ENCODE measurements at regions of chr6 and their contacts with region 1.

Region 1: DNA sequence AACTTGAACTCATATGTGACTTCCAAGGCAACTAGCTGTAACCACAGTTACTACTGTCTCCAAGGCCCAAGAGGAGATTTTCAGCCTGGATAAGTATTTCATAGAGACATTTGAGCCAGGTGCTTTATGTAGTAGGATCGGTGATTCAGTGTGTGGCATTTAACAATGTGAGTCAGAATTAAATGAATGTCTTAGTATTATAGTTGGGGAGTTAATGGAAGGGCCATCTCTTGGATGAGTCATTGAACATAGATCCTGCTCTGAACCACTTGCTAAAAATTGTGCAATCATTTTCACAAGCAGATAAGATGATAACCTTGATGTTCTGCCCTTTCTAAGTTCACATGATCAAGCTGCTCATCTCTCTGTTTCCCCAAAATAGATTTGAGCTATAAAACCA is 668.9 kb upstream of the CITED2 start:
- DNase-seq: peak; percentile 66
- H3K4me3 ChIP-seq: no peak overlapping the region
- H3K27ac ChIP-seq: peak overlapping the region; percentile 73
- H3K4me1 ChIP-seq: peaks cover 47% of the 10 kb centered on the region
- H3K27me3 ChIP-seq: no peaks in the 10 kb centered on the region
- CTCF ChIP-seq: no peak

Region 2: DNA sequence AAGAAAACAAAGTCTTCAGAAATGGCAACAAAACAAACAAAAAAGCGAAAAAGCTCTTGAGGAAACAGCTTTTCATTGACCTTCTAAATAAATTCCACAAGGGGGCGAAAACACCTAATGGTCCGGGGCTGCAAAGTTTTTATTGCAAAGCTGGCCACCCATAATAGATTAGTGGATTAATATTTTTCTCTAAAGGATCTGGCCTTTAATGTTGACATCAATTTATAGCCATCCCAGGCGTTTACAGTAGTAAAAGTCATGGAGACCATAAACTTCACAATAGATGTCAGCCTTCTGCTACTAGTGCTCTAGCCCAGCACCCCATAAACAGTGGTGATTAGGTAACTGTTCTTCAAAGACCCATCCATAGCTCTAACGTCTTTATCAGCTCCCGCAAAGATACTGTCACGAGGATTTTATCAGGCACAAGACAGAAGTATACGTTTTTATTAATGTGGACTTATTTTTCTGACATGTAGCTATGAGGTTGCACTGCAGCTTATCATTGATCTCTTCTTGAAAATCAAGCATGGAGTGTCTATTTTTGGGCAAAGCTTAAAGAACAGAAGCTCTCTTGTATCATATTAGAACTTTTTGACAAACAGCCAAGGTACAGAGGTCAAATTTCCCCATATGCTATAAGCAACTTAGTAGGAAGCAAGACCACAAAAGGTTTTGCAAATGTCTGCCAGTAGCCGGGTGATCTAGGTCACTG is 673.6 kb before region 1 on chr6:
- CTCF ChIA-PET with region 1: interaction called, 6 read pairs
- POLR2A ChIA-PET with region 1: interaction called, 6 read pairs
- intact Hi-C with region 1: loop called (anchors 1 kb)
- DNase-seq: peak; percentile 86
- H3K4me3 ChIP-seq: peak overlapping the region; percentile 87
- H3K27ac ChIP-seq: peak overlapping the region; percentile 96
- H3K4me1 ChIP-seq: peaks cover 43% of the 10 kb centered on the region
- H3K27me3 ChIP-seq: no peaks in the 10 kb centered on the region
- CTCF ChIP-seq: peak; percentile 76

Region 3: GRCh38 chr6:139547111-139547776 is 496.1 kb before region 1 on chr6:
- CTCF ChIA-PET with region 1: no interaction called
- POLR2A ChIA-PET with region 1: interaction called, 3 read pairs
- intact Hi-C with region 1: loop called (anchors 1 kb)
- DNase-seq: peak; percentile 96
- H3K4me3 ChIP-seq: peak overlapping the region; percentile 16
- H3K27ac ChIP-seq: peak overlapping the region; percentile 93
- H3K4me1 ChIP-seq: peaks cover 48% of the 10 kb centered on the region
- H3K27me3 ChIP-seq: no peaks in the 10 kb centered on the region
- CTCF ChIP-seq: no peak

Region 4: DNA sequence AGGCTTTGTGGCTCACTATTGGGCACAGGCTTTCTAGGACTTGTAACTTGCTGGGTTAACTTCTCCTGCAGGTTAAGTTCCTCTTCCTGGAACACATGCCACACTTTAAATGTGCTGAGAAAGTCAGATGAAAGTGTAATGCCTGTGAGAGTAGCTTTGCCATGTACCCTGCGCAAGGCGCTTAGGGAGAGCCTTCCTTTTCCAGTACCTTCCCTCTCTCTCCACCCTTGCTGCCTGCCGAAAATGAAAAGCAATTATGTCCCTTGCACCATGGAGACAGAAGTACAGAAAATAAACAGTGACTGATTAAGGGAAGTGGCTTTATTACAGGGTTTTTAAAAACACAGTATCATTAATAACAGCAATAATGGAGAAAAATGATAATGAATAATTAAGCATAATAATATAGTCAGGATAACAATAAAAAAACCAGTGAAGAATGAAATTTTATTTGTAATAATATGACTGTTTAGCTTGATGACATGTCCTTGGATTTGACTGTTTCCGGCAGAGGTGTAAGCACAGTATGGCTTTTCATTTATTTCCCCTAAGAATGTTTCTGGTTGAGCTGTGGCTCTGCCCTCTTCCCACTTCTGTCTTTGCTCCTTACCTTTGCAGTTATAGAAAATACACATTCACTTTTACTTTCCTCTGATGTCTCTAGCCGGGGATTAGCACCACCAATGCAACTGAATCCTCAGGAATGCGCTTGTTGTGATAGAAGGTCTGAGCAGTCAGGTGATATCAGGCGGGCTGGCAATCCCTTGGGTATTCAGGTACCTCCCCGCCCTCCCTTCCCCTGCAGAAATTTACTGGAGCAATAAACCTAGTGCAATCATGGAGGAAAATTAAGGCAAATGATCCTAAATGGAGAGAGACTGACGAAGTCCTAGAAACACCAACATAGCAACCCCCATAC is 196.5 kb before region 1 on chr6:
- CTCF ChIA-PET with region 1: no interaction called
- POLR2A ChIA-PET with region 1: no interaction called
- intact Hi-C with region 1: no loop called
- DNase-seq: no peak
- H3K4me3 ChIP-seq: no peak overlapping the region
- H3K27ac ChIP-seq: no peak overlapping the region
- H3K4me1 ChIP-seq: no peaks in the 10 kb centered on the region
- H3K27me3 ChIP-seq: no peaks in the 10 kb centered on the region
- CTCF ChIP-seq: no peak

Region 5: GRCh38 chr6:139940741-139941729 is 102.3 kb before region 1 on chr6:
- CTCF ChIA-PET with region 1: no interaction called
- POLR2A ChIA-PET with region 1: no interaction called
- intact Hi-C with region 1: loop called (anchors 5 kb)
- DNase-seq: no peak
- H3K4me3 ChIP-seq: no peak overlapping the region
- H3K27ac ChIP-seq: no peak overlapping the region
- H3K4me1 ChIP-seq: peaks cover 35% of the 10 kb centered on the region
- H3K27me3 ChIP-seq: no peaks in the 10 kb centered on the region
- CTCF ChIP-seq: no peak

Region 6: GRCh38 chr6:140134224-140134623 is 90.9 kb after region 1 on chr6:
- CTCF ChIA-PET with region 1: no interaction called
- POLR2A ChIA-PET with region 1: no interaction called
- intact Hi-C with region 1: no loop called
- DNase-seq: no peak
- H3K4me3 ChIP-seq: no peak overlapping the region
- H3K27ac ChIP-seq: no peak overlapping the region
- H3K4me1 ChIP-seq: no peaks in the 10 kb centered on the region
- H3K27me3 ChIP-seq: no peaks in the 10 kb centered on the region
- CTCF ChIP-seq: no peak

Region 7: DNA sequence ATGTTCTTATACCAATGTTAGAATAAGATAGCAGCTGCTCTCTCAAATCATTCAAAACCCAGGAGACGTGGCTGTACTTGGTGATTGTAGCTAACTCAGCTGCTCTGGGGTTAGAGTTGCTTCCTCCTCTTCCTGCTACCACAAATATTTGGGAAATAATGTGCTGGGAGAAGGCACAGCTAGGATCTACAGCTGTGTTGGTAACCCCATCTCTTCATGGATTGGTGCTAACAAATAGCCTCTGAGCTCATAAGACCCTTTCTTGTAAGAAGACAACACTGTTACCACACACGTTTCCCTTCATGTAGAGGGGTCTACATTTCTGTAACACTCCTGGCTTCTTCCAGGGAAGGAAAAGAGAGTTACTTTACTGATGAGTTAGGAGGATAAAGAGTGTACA is 242.1 kb after region 1 on chr6:
- CTCF ChIA-PET with region 1: no interaction called
- POLR2A ChIA-PET with region 1: interaction called, 3 read pairs
- intact Hi-C with region 1: loop called (anchors 1 kb)
- DNase-seq: peak; percentile 63
- H3K4me3 ChIP-seq: no peak overlapping the region
- H3K27ac ChIP-seq: peak overlapping the region; percentile 91
- H3K4me1 ChIP-seq: peaks cover 36% of the 10 kb centered on the region
- H3K27me3 ChIP-seq: no peaks in the 10 kb centered on the region
- CTCF ChIP-seq: no peak

Region 8: GRCh38 chr6:140554421-140554820 is 511.1 kb after region 1 on chr6:
- CTCF ChIA-PET with region 1: no interaction called
- POLR2A ChIA-PET with region 1: no interaction called
- intact Hi-C with region 1: no loop called
- DNase-seq: no peak
- H3K4me3 ChIP-seq: no peak overlapping the region
- H3K27ac ChIP-seq: no peak overlapping the region
- H3K4me1 ChIP-seq: no peaks in the 10 kb centered on the region
- H3K27me3 ChIP-seq: no peaks in the 10 kb centered on the region
- CTCF ChIP-seq: no peak

Region 9: GRCh38 chr6:140602431-140603248 is 559.3 kb after region 1 on chr6:
- CTCF ChIA-PET with region 1: no interaction called
- POLR2A ChIA-PET with region 1: no interaction called
- intact Hi-C with region 1: no loop called
- DNase-seq: no peak
- H3K4me3 ChIP-seq: no peak overlapping the region
- H3K27ac ChIP-seq: no peak overlapping the region
- H3K4me1 ChIP-seq: no peaks in the 10 kb centered on the region
- H3K27me3 ChIP-seq: no peaks in the 10 kb centered on the region
- CTCF ChIP-seq: no peak

Region 10: GRCh38 chr6:141634269-141634668 is 1590.9 kb after region 1 on chr6:
- CTCF ChIA-PET with region 1: no interaction called
- POLR2A ChIA-PET with region 1: no interaction called
- intact Hi-C with region 1: loop called (anchors 1 kb)
- DNase-seq: no peak
- H3K4me3 ChIP-seq: no peak overlapping the region
- H3K27ac ChIP-seq: peak overlapping the region; percentile 100
- H3K4me1 ChIP-seq: peaks cover 48% of the 10 kb centered on the region
- H3K27me3 ChIP-seq: no peaks in the 10 kb centered on the region
- CTCF ChIP-seq: no peak